ENCODE measurements at regions of chr21 and their contacts with region 1.

Region 1: GRCh38 chr21:25607151-25608043 is at the start of gene MRPL39:
- DNase-seq: peak; percentile 92
- H3K4me3 ChIP-seq: peak within 1 kb of the TSS; percentile 82
- H3K27ac ChIP-seq: peak within 1 kb of the TSS; percentile 48
- H3K4me1 ChIP-seq: peaks cover 22% of the 10 kb centered on the region
- CTCF ChIP-seq: peak; percentile 74
- total RNA-seq, gene MRPL39: 42.1 and 45.0 TPM in 2 replicates

Region 2: DNA sequence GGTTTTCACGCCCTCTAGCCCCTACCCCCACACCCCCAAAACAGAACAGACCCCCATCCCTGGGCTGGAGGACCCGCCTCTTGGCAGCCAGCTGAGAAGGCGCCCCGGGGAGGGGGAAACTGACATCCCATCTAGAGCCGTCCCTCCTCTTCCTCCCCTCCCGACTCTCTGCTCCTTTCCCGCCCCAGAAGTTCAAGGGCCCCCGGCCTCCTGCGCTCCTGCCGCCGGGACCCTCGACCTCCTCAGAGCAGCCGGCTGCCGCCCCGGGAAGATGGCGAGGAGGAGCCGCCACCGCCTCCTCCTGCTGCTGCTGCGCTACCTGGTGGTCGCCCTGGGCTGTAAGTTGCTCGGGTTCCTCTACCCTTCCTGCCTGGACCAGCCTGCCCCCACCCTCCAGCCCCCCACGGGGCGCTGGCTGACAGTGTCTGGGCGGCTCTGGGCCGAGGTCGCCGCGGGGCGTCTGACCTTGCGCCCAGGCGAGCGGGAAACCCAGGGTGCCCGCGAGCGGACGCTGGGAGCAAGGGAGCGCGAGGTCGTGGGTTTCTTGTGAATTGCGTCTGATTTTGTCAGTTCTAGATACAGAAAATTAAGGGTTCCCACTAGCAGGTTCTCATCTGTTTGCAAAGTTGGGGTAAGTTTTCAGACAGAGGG is 32.3 kb after region 1 on chr21:
- CTCF ChIA-PET with region 1: interaction called, 3 read pairs
- POLR2A ChIA-PET with region 1: no interaction called
- intact Hi-C with region 1: loop called (anchors 1 kb)
- DNase-seq: peak; percentile 56
- H3K4me3 ChIP-seq: peak overlapping the region; percentile 70
- H3K27ac ChIP-seq: no peak overlapping the region
- H3K4me1 ChIP-seq: peaks cover 19% of the 10 kb centered on the region
- CTCF ChIP-seq: peak; percentile 46; the same call in 1 of the 2 replicates

Region 3: DNA sequence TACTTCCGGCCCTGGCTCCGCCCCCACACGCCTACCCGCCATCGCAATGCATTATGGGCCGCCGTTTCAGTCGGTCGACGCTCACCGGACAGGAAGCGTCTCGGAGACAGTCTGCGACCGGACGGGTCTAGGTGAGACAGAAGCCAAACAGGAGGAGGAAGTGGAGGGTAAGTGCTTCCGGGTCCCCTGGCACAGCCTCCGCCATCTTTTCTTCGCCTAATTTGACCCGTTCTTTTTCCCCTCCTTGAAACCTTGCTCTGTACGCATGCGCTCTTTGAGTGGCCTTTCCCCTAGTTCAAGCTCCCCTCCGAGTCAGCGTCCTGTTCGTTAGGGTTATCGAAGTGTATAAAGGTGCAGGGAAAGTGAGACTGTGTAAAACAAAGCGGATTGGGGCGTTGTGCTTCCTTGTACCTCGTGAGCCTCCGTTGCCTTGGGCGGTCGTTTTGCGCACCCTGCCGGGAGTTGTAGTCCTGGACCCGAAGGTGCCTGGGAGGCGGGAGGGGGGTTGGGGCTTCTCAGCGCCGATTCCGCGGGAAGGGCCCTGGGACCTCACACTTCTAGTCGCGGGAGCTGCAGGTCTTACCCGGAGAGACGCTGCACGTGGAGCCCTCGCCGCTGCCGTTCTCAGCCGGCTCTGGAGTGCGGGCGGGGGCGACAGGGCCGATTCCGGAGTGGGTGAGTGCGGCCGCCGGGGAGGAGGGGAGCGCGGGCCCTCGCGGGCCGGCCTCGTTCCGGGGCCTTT is 127.7 kb after region 1 on chr21 and contains the starts of genes ATP5PF and GABPA:
- CTCF ChIA-PET with region 1: interaction called, 6 read pairs
- POLR2A ChIA-PET with region 1: interaction called, 4 read pairs
- intact Hi-C with region 1: loop called (anchors 1 kb)
- DNase-seq: peak; percentile 98
- H3K4me3 ChIP-seq: peak within 1 kb of the TSS; percentile 85
- H3K27ac ChIP-seq: peak within 1 kb of the TSS; percentile 92
- H3K4me1 ChIP-seq: peaks cover 51% of the 10 kb centered on the region
- CTCF ChIP-seq: no peak
- total RNA-seq, gene ATP5PF: 70.6 and 83.8 TPM in 2 replicates
- total RNA-seq, gene GABPA: 21.9 and 22.2 TPM in 2 replicates

Region 4: GRCh38 chr21:25862596-25862995 is 255.2 kb after region 1 on chr21:
- CTCF ChIA-PET with region 1: no interaction called
- POLR2A ChIA-PET with region 1: no interaction called
- intact Hi-C with region 1: loop called (anchors 2 kb)
- DNase-seq: peak; percentile 34
- H3K4me3 ChIP-seq: no peak overlapping the region
- H3K27ac ChIP-seq: no peak overlapping the region
- H3K4me1 ChIP-seq: no peaks in the 10 kb centered on the region
- CTCF ChIP-seq: peak; percentile 84

Region 5: GRCh38 chr21:25967573-25968438 is 360.4 kb after region 1 on chr21:
- CTCF ChIA-PET with region 1: no interaction called
- POLR2A ChIA-PET with region 1: interaction called, 3 read pairs
- intact Hi-C with region 1: loop called (anchors 5 kb)
- DNase-seq: peak; percentile 87
- H3K4me3 ChIP-seq: peak overlapping the region; percentile 37
- H3K27ac ChIP-seq: peak overlapping the region; percentile 74
- H3K4me1 ChIP-seq: peaks cover 20% of the 10 kb centered on the region
- CTCF ChIP-seq: no peak

Measured in OCI-LY7 (cell line).